Prostate gland (tissue), 2 donors: ENCODE measurements at regions of chr1 and their contacts with region 1.

Region 1: GRCh38 chr1:111990878-111991718 is 1.6 kb upstream of the KCND3 start:
- DNase-seq: peak; percentile 87
- H3K4me3 ChIP-seq: peak overlapping the region; percentile 54 to 70
- H3K27ac ChIP-seq: peak overlapping the region; percentile 74 to 80
- H3K4me1 ChIP-seq: peaks cover 10% of the 10 kb centered on the region
- H3K27me3 ChIP-seq: no peaks in the 10 kb centered on the region
- CTCF ChIP-seq: peak in 3 of 4 experiments; percentile 60 to 73 (median 67)
- POLR2A ChIP-seq: no peak

Region 2: DNA sequence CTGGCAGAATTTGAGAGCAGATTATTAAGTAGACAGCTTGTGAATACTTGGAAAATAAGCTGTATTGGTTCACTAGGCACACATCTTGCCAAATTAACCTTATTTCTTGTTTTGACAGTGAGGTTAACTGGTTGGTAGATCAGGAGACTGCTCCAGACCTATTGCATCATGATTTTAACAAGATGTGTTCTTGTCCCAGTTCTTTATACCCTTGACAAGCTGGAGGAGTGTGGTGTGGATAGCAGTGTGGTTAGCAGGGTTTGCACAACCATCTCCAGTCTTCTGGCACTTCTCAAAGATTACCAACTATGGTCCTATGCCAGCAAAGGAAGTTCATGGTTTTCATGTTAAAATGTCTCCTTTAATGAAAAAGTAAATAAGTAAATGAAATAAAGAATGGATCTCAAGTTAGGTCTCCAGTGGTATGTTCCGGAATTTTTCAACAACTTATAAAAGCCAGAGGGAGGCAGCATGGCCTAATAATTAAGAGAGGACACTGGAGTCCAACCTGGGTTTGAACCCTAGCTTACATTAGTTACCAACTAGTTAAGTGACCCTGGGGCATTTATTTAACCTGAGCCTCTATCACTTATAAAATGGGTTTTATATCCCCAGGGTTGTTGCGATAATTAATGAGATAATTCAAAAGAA is 201.3 kb before region 1 on chr1:
- intact Hi-C with region 1: loop called (anchors 5 kb)
- DNase-seq: no peak
- H3K4me3 ChIP-seq: no peak overlapping the region
- H3K27ac ChIP-seq: no peak overlapping the region
- H3K4me1 ChIP-seq: no peaks in the 10 kb centered on the region
- H3K27me3 ChIP-seq: no peaks in the 10 kb centered on the region
- CTCF ChIP-seq: peak in 3 of 4 experiments; percentile 10 to 60 (median 30)
- POLR2A ChIP-seq: no peak

Region 3: DNA sequence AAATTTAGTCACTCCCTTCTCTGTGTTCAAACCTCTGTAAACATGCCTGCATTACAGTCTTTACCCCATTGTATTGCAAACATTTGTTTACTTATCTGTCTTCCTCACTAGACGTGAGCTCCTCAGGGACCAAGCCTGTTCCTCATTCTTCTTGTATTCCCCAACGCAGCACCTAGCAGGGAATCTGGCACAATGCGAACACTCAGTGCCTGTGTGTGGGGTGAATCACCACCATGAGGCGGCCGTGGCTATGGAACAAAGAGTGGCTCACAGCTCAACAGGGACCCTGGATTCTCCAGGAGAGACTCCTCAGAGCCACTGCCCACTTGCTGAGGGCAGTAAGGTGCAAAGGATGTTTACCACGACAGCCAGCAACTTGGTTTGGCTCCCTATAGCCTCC is 139.5 kb before region 1 on chr1:
- intact Hi-C with region 1: no loop called
- DNase-seq: no peak
- H3K4me3 ChIP-seq: no peak overlapping the region
- H3K27ac ChIP-seq: no peak overlapping the region
- H3K4me1 ChIP-seq: peaks cover 2% of the 10 kb centered on the region
- H3K27me3 ChIP-seq: no peaks in the 10 kb centered on the region
- CTCF ChIP-seq: no peak
- POLR2A ChIP-seq: no peak

Region 4: GRCh38 chr1:112188611-112189010 is 197.5 kb after region 1 on chr1:
- intact Hi-C with region 1: no loop called
- DNase-seq: no peak
- H3K4me3 ChIP-seq: no peak overlapping the region
- H3K27ac ChIP-seq: no peak overlapping the region
- H3K4me1 ChIP-seq: no peaks in the 10 kb centered on the region
- H3K27me3 ChIP-seq: no peaks in the 10 kb centered on the region
- CTCF ChIP-seq: no peak
- POLR2A ChIP-seq: no peak

Region 5: DNA sequence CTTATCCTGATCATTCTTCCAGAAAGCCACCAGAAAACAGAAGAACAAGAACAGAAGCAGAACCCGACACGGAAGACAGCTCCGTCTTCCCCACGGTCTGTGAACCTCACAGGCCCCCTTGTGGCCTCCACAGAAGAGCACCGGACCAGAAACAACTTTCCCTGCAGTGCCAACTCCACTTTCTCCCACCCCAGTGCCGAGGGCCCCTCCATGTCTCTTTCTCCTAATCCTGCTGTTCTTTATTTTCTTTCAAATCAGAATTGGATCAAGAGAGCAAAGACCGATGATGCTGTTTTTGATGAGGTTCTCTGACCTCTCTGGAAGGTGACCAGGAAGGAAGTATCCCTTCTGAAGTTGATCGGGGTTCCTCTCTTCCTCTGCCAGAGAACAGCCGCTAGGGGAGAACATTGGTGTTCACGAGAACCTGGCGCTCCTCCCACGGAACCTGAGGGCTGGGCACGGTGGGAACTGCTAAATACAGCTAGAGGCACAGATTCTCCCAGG is 346.0 kb after region 1 on chr1:
- intact Hi-C with region 1: loop called (anchors 10 kb)
- DNase-seq: peak; percentile 31
- H3K4me3 ChIP-seq: no peak overlapping the region
- H3K27ac ChIP-seq: no peak overlapping the region
- H3K4me1 ChIP-seq: no peaks in the 10 kb centered on the region
- H3K27me3 ChIP-seq: no peaks in the 10 kb centered on the region
- CTCF ChIP-seq: peak in 3 of 4 experiments; percentile 58 to 71 (median 59)
- POLR2A ChIP-seq: no peak